IMR-90 (cell line): ENCODE measurements at regions of chr18 and their contacts with region 1.

Region 1: GRCh38 chr18:61738488-61738887 is 154.3 kb downstream of the RNF152 start:
- DNase-seq: peak; percentile 40
- ATAC-seq: no peak; the same call in 1 of the 2 replicates
- H3K4me3 ChIP-seq: no peak overlapping the region
- H3K27ac ChIP-seq: no peak overlapping the region
- H3K4me1 ChIP-seq: peaks cover 6% of the 10 kb centered on the region
- H3K27me3 ChIP-seq: no peaks in the 10 kb centered on the region
- CTCF ChIP-seq: no peak
- POLR2A ChIP-seq: no peak
- RAD21 ChIP-seq: no peak

Region 2: GRCh38 chr18:59957971-59958595 is 1780.4 kb before region 1 on chr18:
- CTCF ChIA-PET with region 1: no interaction called
- POLR2A ChIA-PET with region 1: no interaction called
- dilution Hi-C with region 1: no loop called
- in situ Hi-C with region 1: no loop called
- intact Hi-C with region 1: loop called (anchors 10 kb)
- DNase-seq: peak; percentile 83
- ATAC-seq: peak; percentile 54; the same call in 1 of the 2 replicates
- H3K4me3 ChIP-seq: no peak overlapping the region
- H3K27ac ChIP-seq: no peak overlapping the region
- H3K4me1 ChIP-seq: peaks cover 6% of the 10 kb centered on the region
- H3K27me3 ChIP-seq: no peaks in the 10 kb centered on the region
- CTCF ChIP-seq: no peak
- POLR2A ChIP-seq: no peak
- RAD21 ChIP-seq: no peak

Region 3: DNA sequence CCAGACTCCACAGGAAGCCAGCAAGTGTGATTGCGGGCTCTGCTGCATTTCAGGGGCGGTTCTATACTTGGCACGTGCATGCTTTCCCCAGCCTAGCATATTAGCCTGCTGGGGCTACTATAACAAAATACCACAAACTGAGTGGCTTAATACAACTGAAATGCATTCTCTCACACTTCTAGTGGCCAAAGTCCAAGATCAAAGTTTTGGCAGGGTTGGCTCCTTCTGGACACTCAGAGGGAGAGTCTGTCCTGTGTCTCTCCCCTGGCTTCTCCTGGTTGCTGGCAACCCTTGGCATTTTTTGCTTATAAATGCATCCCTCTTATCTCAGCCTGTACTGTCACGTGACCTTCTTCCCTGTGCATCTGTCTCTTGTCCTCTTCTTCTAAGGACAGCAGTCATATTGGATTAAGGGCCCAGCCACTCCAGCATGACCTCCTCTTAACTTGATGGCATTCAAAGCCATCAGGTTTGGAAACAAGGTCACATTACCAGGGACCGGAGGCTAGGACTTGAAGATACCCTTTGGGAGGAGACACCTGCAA is 15.6 kb after region 1 on chr18:
- CTCF ChIA-PET with region 1: no interaction called
- POLR2A ChIA-PET with region 1: no interaction called
- dilution Hi-C with region 1: no loop called
- in situ Hi-C with region 1: no loop called
- intact Hi-C with region 1: no loop called
- DNase-seq: no peak
- ATAC-seq: no peak; the same call in 1 of the 2 replicates
- H3K4me3 ChIP-seq: no peak overlapping the region
- H3K27ac ChIP-seq: no peak overlapping the region
- H3K4me1 ChIP-seq: peaks cover 1% of the 10 kb centered on the region; the same call in 1 of the 2 replicates
- H3K27me3 ChIP-seq: no peaks in the 10 kb centered on the region
- CTCF ChIP-seq: no peak
- POLR2A ChIP-seq: no peak
- RAD21 ChIP-seq: no peak

Region 4: GRCh38 chr18:61893971-61894750 is 155.7 kb after region 1 on chr18:
- CTCF ChIA-PET with region 1: no interaction called
- POLR2A ChIA-PET with region 1: no interaction called
- dilution Hi-C with region 1: no loop called
- in situ Hi-C with region 1: no loop called
- intact Hi-C with region 1: no loop called
- DNase-seq: peak; percentile 64
- ATAC-seq: peak; percentile 93
- H3K4me3 ChIP-seq: peak overlapping the region; percentile 95
- H3K27ac ChIP-seq: peak overlapping the region; percentile 74
- H3K4me1 ChIP-seq: peaks cover 7% of the 10 kb centered on the region
- H3K27me3 ChIP-seq: no peaks in the 10 kb centered on the region
- CTCF ChIP-seq: peak; percentile 54
- POLR2A ChIP-seq: peak; percentile 76
- RAD21 ChIP-seq: peak; percentile 60